CD4-positive, alpha-beta T cell (primary cell): ENCODE measurements at regions of chr6 and their contacts with region 1.

Region 1: DNA sequence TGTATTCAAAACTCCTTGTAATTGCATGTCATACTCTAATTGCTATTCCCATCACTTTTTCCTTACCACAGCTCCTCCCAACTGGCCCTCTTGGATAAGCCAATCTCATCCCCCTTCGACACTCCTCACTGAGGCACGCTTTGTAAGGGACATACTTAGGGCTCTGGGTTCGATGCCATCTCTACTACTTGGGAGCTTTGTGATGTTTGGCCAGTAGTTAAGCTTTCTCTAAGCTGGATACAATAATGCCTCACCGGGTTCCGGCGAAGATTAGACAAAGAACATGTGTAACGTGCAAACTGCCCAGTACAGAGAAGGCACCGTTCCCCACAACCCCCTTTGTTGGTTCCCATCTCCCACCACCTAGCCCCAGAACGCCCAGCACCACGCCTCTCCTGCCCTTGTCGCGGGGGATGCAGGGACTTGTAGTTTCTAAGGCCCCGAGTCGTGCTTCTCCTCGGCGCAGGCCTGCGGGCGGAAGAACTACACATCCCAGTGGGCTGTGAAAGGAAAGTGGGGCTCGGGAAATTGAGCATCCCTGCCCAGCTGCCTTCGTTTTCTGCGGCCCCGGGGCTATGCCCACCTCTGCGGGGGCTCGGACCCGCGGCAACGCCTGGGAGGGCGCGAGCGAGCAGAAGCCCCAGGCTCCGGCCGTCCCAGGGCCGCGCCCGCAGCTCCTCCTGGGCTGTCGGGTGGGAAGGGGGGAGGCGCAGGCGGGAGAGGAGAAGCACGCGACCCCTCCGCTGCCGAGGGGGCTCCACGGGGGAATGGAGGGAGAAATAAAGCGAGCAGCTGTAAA is 1.1 kb upstream of the ZDHHC14 start:
- DNase-seq: peak; percentile 75 to 93 (median 82)
- ATAC-seq: peak; percentile 78
- H3K4me3 ChIP-seq: peak overlapping the region; percentile 95
- H3K4me3 Mint-ChIP-seq: peak overlapping the region; percentile 82
- H3K27ac ChIP-seq: peak overlapping the region; percentile 73 to 75
- H3K27ac Mint-ChIP-seq: peak overlapping the region; percentile 51
- H3K4me1 ChIP-seq: peaks cover 15% of the 10 kb centered on the region
- H3K4me1 Mint-ChIP-seq: peaks cover 13% of the 10 kb centered on the region
- H3K27me3 ChIP-seq: no peaks in the 10 kb centered on the region
- H3K27me3 Mint-ChIP-seq: no peaks in the 10 kb centered on the region
- CTCF ChIP-seq: no peak

Region 2: DNA sequence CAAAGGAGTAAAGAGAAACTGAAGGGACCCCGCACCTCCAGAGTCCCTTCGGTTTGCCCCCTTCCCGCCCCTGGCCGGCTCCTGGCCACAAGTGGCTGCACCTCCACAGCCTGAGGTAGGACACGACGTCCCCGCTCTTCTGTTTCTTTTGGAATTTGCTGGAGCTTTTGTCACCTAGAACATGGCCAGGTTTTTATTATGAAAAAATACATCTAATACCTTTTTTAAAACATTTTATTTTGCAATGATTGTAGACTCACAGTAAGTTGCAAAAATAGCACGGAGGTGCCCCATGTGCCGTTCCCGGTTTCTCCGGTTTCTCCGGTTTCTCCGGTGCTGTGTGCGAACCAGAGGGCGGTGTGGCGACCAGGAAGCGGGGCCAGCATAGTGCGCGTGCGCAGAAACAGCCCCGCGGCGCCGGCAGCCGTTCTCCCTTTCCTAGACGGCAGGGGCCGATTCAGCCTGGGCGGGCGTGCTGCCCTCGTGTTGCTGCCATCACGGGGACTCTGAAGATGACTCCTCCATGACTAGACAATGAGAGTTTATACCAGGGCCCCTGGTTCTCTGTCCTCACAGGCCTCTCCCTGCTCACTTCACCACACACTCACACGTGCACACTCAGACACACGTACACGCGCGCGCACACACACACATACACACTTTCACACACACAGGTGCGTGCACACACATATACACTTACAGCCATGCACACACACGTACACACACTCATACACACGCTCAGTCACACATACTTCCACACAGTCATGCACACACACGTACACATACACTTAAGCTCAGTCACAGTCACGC is 158.6 kb before region 1 on chr6:
- CTCF ChIA-PET with region 1: no interaction called
- POLR2A ChIA-PET with region 1: no interaction called
- intact Hi-C with region 1: loop called in 1 of 2 experiments (anchors 10 kb)
- DNase-seq: peak; percentile 67 to 90 (median 80)
- ATAC-seq: peak; percentile 94
- H3K4me3 ChIP-seq: peak overlapping the region; percentile 60
- H3K4me3 Mint-ChIP-seq: peak overlapping the region; percentile 88
- H3K27ac ChIP-seq: no peak overlapping the region
- H3K27ac Mint-ChIP-seq: peak overlapping the region; percentile 28
- H3K4me1 ChIP-seq: peaks cover 44% of the 10 kb centered on the region
- H3K4me1 Mint-ChIP-seq: peaks cover 38% of the 10 kb centered on the region
- H3K27me3 ChIP-seq: no peaks in the 10 kb centered on the region
- H3K27me3 Mint-ChIP-seq: no peaks in the 10 kb centered on the region
- CTCF ChIP-seq: no peak

Region 3: GRCh38 chr6:157314705-157315321 is 65.0 kb before region 1 on chr6:
- CTCF ChIA-PET with region 1: no interaction called
- POLR2A ChIA-PET with region 1: no interaction called
- intact Hi-C with region 1: loop called in 1 of 2 experiments (anchors 2 kb)
- DNase-seq: peak in 4 of 14 experiments; percentile 25 to 79 (median 73)
- ATAC-seq: peak; percentile 98
- H3K4me3 ChIP-seq: no peak overlapping the region
- H3K4me3 Mint-ChIP-seq: no peak overlapping the region
- H3K27ac ChIP-seq: no peak overlapping the region
- H3K27ac Mint-ChIP-seq: no peak overlapping the region
- H3K4me1 ChIP-seq: peaks cover 3% of the 10 kb centered on the region
- H3K4me1 Mint-ChIP-seq: peaks cover 15% of the 10 kb centered on the region
- H3K27me3 ChIP-seq: no peaks in the 10 kb centered on the region
- H3K27me3 Mint-ChIP-seq: no peaks in the 10 kb centered on the region
- CTCF ChIP-seq: peak; percentile 90

Region 4: GRCh38 chr6:157368359-157369049 is 11.4 kb before region 1 on chr6:
- CTCF ChIA-PET with region 1: no interaction called
- POLR2A ChIA-PET with region 1: interaction called, 13 read pairs
- intact Hi-C with region 1: no loop called
- DNase-seq: no peak
- ATAC-seq: no peak
- H3K4me3 ChIP-seq: no peak overlapping the region
- H3K4me3 Mint-ChIP-seq: no peak overlapping the region
- H3K27ac ChIP-seq: no peak overlapping the region
- H3K27ac Mint-ChIP-seq: no peak overlapping the region
- H3K4me1 ChIP-seq: peaks cover 11% of the 10 kb centered on the region
- H3K4me1 Mint-ChIP-seq: peaks cover 9% of the 10 kb centered on the region
- H3K27me3 ChIP-seq: peaks cover 0 to 34% of the 10 kb centered on the region in 2 experiments
- H3K27me3 Mint-ChIP-seq: peaks cover 57% of the 10 kb centered on the region
- CTCF ChIP-seq: no peak

Region 5: DNA sequence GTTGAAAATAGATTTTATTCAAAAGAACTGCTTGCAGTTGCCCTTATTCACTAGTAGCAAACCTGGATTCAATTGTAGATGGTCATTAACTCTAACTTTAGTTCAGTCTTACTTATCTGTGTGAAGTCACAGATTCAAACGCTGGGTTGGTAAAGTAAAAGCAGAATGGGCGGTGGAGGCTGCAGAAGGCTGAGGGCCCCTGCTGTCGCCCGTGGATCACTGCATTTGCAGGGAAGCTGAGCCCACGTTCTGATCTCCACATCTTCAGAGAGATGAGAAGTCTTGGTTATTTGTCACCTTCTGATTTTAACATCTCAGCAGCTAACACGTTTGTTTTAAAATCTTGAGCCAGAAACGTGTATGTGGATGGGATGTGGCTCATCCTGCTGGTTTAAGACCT is 518.3 kb after region 1 on chr6:
- CTCF ChIA-PET with region 1: no interaction called
- POLR2A ChIA-PET with region 1: no interaction called
- intact Hi-C with region 1: loop called in 1 of 2 experiments (anchors 10 kb)
- DNase-seq: peak in 7 of 14 experiments; percentile 14 to 62 (median 39)
- ATAC-seq: peak; percentile 67
- H3K4me3 ChIP-seq: no peak overlapping the region
- H3K4me3 Mint-ChIP-seq: no peak overlapping the region
- H3K27ac ChIP-seq: no peak overlapping the region
- H3K27ac Mint-ChIP-seq: peak overlapping the region; percentile 72
- H3K4me1 ChIP-seq: peaks cover 3% of the 10 kb centered on the region
- H3K4me1 Mint-ChIP-seq: peaks cover 28% of the 10 kb centered on the region
- H3K27me3 ChIP-seq: no peaks in the 10 kb centered on the region
- H3K27me3 Mint-ChIP-seq: no peaks in the 10 kb centered on the region
- CTCF ChIP-seq: peak; percentile 31

Region 6: GRCh38 chr6:158170656-158171081 is 790.8 kb after region 1 on chr6:
- CTCF ChIA-PET with region 1: no interaction called
- POLR2A ChIA-PET with region 1: no interaction called
- intact Hi-C with region 1: loop called in 1 of 2 experiments (anchors 5 kb)
- DNase-seq: no peak
- ATAC-seq: no peak
- H3K4me3 ChIP-seq: no peak overlapping the region
- H3K4me3 Mint-ChIP-seq: no peak overlapping the region
- H3K27ac ChIP-seq: no peak overlapping the region
- H3K27ac Mint-ChIP-seq: no peak overlapping the region
- H3K4me1 ChIP-seq: peaks cover 14% of the 10 kb centered on the region
- H3K4me1 Mint-ChIP-seq: peaks cover 42% of the 10 kb centered on the region
- H3K27me3 ChIP-seq: no peaks in the 10 kb centered on the region
- H3K27me3 Mint-ChIP-seq: no peaks in the 10 kb centered on the region
- CTCF ChIP-seq: no peak

Region 7: DNA sequence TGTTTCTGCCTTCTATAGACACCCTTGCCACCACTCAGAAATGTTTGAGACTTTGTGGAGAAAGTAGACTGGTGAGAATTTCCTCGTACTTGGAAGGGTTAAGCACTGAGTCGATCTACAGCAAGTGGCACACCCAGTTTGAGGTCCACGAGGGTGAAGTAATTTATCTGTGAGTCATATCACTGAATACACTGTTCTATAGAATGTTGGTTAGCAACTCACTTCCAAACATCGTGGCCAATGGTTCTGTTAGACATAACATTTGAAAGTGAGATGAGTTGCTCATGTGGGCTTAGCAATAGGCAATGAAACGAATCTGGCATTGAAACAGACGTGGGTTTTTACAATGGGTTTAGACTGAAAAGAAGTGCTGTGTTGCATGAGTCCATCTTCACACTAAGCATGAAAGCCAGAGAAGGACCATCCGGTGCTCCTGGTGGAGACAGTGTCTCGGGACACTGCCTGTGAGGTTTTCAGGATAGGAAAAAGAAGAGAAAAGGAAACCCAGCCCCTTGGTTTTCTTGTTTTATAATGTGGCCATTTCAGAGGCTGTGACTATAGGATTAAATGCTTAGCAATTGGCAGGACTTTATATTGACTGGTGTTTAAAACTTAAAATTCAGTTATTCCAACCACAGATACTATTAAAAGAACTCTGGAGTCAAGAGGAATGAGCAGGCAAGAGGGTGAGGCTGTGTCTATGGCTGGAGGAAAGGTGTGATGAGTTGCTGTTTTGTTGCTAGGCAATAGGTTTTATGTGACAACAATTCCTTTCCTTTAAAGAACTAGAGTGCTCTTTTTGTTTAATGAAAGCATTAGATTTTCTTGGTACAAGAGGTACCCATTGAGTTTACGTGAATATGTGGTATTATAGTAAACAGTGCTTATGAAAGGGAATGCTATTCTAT is 1470.3 kb after region 1 on chr6:
- CTCF ChIA-PET with region 1: no interaction called
- POLR2A ChIA-PET with region 1: no interaction called
- intact Hi-C with region 1: no loop called
- DNase-seq: peak in 13 of 14 experiments; percentile 33 to 91 (median 54)
- ATAC-seq: peak; percentile 51
- H3K4me3 ChIP-seq: no peak overlapping the region
- H3K4me3 Mint-ChIP-seq: peak overlapping the region; percentile 26
- H3K27ac ChIP-seq: peak overlapping the region; percentile 59 to 96
- H3K27ac Mint-ChIP-seq: no peak overlapping the region
- H3K4me1 ChIP-seq: peaks cover 49% of the 10 kb centered on the region
- H3K4me1 Mint-ChIP-seq: peaks cover 23% of the 10 kb centered on the region
- H3K27me3 ChIP-seq: no peaks in the 10 kb centered on the region
- H3K27me3 Mint-ChIP-seq: no peaks in the 10 kb centered on the region
- CTCF ChIP-seq: no peak